CD8-positive, alpha-beta memory T cell (primary cell): ENCODE measurements at regions of chr1 and their contacts with region 1.

Region 1: DNA sequence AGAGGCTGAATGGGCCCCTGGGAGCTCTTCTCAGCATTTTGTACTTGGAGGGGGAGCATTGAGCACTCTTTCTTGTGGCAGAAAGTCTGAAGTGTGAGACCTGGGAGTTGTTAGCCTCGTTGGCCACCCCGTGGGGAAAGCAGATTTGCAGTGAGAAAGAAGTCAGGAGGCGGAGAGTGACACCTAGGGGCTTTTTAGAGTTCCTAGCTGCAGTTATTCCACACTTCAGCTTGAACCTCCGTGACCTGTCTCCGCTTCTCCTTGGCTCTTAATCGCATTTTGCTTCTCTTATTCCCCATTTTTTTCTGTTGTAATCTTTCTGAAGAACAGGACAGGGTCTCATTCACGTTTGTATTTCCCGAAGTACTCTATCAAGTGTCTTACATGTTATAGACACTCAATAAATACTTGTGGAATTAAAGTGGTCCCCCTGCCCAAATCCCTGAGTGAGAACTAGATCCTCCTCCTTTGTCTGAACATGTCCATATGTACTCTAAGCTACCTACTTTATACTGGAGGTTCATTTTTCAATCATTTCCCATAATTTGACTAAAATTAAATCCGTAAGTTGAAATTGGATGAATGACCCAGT is 14.5 kb upstream of the C1orf141 start:
- DNase-seq: peak; percentile 15 to 69 (median 55)
- H3K4me3 ChIP-seq: no peak overlapping the region
- H3K4me3 Mint-ChIP-seq: no peak overlapping the region
- H3K27ac ChIP-seq: no peak overlapping the region
- H3K27ac Mint-ChIP-seq: peak overlapping the region in 4 of 8 donors; percentile 52 to 83 (median 56)
- H3K4me1 ChIP-seq: peaks cover 17% of the 10 kb centered on the region
- H3K4me1 Mint-ChIP-seq: peaks cover 21 to 36% (median 25%) of the 10 kb centered on the region in 3 donors
- H3K27me3 ChIP-seq: no peaks in the 10 kb centered on the region
- H3K27me3 Mint-ChIP-seq: peaks cover 9 to 36% of the 10 kb centered on the region in 2 donors

Region 2: GRCh38 chr1:66764994-66765578 is 384.2 kb before region 1 on chr1:
- CTCF ChIA-PET with region 1: interaction called, 28 read pairs
- POLR2A ChIA-PET with region 1: interaction called, 4 read pairs
- DNase-seq: peak; percentile 6 to 52 (median 34)
- H3K4me3 ChIP-seq: no peak overlapping the region
- H3K4me3 Mint-ChIP-seq: no peak overlapping the region
- H3K27ac ChIP-seq: no peak overlapping the region
- H3K27ac Mint-ChIP-seq: no peak overlapping the region
- H3K4me1 ChIP-seq: peaks cover 13% of the 10 kb centered on the region
- H3K4me1 Mint-ChIP-seq: peaks cover 14 to 20% (median 16%) of the 10 kb centered on the region in 3 donors
- H3K27me3 ChIP-seq: no peaks in the 10 kb centered on the region
- H3K27me3 Mint-ChIP-seq: peaks cover 0 to 3% of the 10 kb centered on the region in 2 donors

Region 3: GRCh38 chr1:66996018-66996682 is 153.1 kb before region 1 on chr1:
- CTCF ChIA-PET with region 1: interaction called, 20 read pairs
- POLR2A ChIA-PET with region 1: no interaction called
- DNase-seq: peak; percentile 10 to 67 (median 32)
- H3K4me3 ChIP-seq: no peak overlapping the region
- H3K4me3 Mint-ChIP-seq: no peak overlapping the region
- H3K27ac ChIP-seq: no peak overlapping the region
- H3K27ac Mint-ChIP-seq: no peak overlapping the region
- H3K4me1 ChIP-seq: peaks cover 7% of the 10 kb centered on the region
- H3K4me1 Mint-ChIP-seq: peaks cover 8 to 23% (median 19%) of the 10 kb centered on the region in 3 donors
- H3K27me3 ChIP-seq: no peaks in the 10 kb centered on the region
- H3K27me3 Mint-ChIP-seq: no peaks in the 10 kb centered on the region

Region 4: DNA sequence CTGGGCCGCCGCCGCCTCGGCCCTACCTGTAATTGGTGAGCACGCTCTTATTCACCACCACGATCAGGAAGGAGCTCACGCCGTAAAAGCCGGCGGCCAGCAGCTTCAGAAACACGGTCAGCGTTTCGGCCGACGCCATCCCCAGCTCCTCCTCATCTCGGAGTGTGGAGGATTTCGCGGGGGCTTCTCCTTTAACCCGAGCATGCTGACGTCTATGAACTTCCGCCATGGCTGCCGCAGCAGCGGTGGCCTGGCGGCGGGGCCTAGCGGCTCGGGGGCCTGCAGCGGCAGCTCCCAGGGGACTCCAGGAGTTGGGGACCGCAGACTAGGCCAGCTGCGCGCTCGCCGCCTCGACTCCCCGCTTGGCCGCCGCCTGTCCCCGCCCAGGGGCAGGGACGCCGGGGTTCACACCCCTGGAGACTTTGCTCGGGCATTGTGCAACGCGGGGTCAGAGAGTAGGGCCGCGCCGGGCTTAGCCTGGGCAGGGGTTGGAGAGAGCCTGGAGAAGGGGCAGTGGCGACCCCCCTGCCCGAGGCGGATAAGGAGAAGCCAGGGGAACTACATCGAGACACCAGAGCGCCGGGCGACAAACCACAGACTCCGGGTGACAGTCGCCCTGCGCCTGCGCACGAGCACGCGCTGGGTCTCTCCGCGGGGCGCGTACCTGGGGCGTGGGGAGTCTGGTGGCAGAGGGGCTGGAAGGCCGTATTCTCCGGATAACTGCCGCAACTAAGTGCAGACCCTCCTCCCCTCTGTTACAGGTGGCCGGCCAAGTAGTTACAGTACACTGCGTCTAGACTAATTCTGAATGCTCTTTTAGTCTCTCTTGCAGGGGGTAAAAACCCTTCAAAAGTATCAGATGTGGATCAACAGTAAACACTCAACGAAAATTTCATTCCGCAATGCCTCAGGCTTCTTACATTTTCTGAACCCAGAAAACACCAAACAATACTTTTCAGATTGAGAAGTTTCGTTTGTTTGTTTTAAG is 95.2 kb before region 1 on chr1 and contains the start of gene SLC35D1:
- CTCF ChIA-PET with region 1: interaction called, 11 read pairs
- POLR2A ChIA-PET with region 1: no interaction called
- DNase-seq: peak; percentile 70 to 82 (median 79)
- H3K4me3 ChIP-seq: peak within 1 kb of the TSS; percentile 89
- H3K4me3 Mint-ChIP-seq: peak within 1 kb of the TSS; percentile 83 to 98 (median 93)
- H3K27ac ChIP-seq: peak within 1 kb of the TSS; percentile 91
- H3K27ac Mint-ChIP-seq: peak within 1 kb of the TSS; percentile 80 to 99 (median 96)
- H3K4me1 ChIP-seq: peaks cover 24% of the 10 kb centered on the region
- H3K4me1 Mint-ChIP-seq: peaks cover 27 to 37% (median 34%) of the 10 kb centered on the region in 3 donors
- H3K27me3 ChIP-seq: no peaks in the 10 kb centered on the region
- H3K27me3 Mint-ChIP-seq: no peaks in the 10 kb centered on the region
- total RNA-seq, gene SLC35D1: 17.0 to 17.5 TPM

Region 5: DNA sequence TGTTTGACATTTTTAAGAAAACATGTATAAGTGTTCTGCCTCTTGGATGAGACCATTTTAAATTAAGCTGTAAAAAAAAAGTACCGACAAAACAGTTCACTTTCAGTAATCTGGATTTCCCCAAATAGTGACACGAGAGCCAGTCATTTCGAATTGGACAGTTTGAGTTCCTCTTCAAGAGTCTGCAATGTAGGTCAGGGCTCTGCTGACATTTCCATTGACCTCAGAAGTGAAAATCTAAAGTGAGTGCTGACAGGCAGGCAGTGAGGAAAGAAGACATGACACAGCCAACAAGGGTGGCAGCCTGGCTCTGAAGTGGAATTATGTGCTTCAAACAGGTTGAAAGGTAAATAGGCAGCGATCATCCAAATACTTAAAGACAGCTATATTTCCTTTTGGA is 16.9 kb after region 1 on chr1 and contains the start of gene IL23R:
- CTCF ChIA-PET with region 1: interaction called, 12 read pairs
- POLR2A ChIA-PET with region 1: interaction called, 12 read pairs
- DNase-seq: peak in 3 of 5 donors; percentile 10 to 66 (median 53)
- H3K4me3 ChIP-seq: no peak within 1 kb of the TSS
- H3K4me3 Mint-ChIP-seq: peak within 1 kb of the TSS in 6 of 7 donors; percentile 74 to 91 (median 90)
- H3K27ac ChIP-seq: no peak within 1 kb of the TSS
- H3K27ac Mint-ChIP-seq: peak within 1 kb of the TSS; percentile 30 to 98 (median 94)
- H3K4me1 ChIP-seq: peaks cover 20% of the 10 kb centered on the region
- H3K4me1 Mint-ChIP-seq: peaks cover 25 to 36% (median 31%) of the 10 kb centered on the region in 3 donors
- H3K27me3 ChIP-seq: no peaks in the 10 kb centered on the region
- H3K27me3 Mint-ChIP-seq: peaks cover 3 to 33% of the 10 kb centered on the region in 2 donors
- total RNA-seq, gene IL23R: 1.6 to 1.7 TPM

Region 6: DNA sequence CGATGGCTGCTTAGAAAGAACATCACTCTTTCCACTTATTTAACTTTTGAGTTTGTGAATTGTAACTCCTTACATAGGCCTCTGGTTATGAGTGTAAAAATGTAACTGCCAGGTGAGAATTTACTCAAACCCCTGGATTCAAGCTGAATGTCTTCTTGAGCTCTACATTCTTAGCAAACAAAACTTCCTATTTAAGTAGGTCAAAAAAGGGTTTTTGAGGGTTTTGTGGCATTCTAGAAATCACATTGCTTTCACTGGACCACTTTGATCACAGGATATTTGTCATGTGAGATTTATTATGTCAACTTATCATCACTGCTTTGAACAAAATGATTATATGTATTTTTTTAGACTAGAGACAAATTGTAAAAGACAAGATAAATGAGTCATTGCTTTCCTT is 22.7 kb after region 1 on chr1:
- CTCF ChIA-PET with region 1: interaction called, 12 read pairs
- POLR2A ChIA-PET with region 1: interaction called, 6 read pairs
- DNase-seq: peak in 2 of 5 donors; percentile 62 to 64
- H3K4me3 ChIP-seq: peak overlapping the region; percentile 2
- H3K4me3 Mint-ChIP-seq: peak overlapping the region; percentile 66 to 84 (median 76)
- H3K27ac ChIP-seq: no peak overlapping the region
- H3K27ac Mint-ChIP-seq: peak overlapping the region; percentile 2 to 96 (median 88)
- H3K4me1 ChIP-seq: peaks cover 34% of the 10 kb centered on the region
- H3K4me1 Mint-ChIP-seq: peaks cover 35 to 61% (median 53%) of the 10 kb centered on the region in 3 donors
- H3K27me3 ChIP-seq: no peaks in the 10 kb centered on the region
- H3K27me3 Mint-ChIP-seq: peaks cover 4% of the 10 kb centered on the region in 2 donors

Region 7: GRCh38 chr1:67214420-67215174 is 65.3 kb after region 1 on chr1:
- CTCF ChIA-PET with region 1: interaction called, 50 read pairs
- POLR2A ChIA-PET with region 1: no interaction called
- DNase-seq: peak; percentile 18 to 51 (median 28)
- H3K4me3 ChIP-seq: no peak overlapping the region
- H3K4me3 Mint-ChIP-seq: no peak overlapping the region
- H3K27ac ChIP-seq: no peak overlapping the region
- H3K27ac Mint-ChIP-seq: peak overlapping the region in 1 of 8 donors; percentile 66
- H3K4me1 ChIP-seq: peaks cover 8% of the 10 kb centered on the region
- H3K4me1 Mint-ChIP-seq: peaks cover 8 to 16% (median 12%) of the 10 kb centered on the region in 3 donors
- H3K27me3 ChIP-seq: no peaks in the 10 kb centered on the region
- H3K27me3 Mint-ChIP-seq: no peaks in the 10 kb centered on the region